Tibial artery (tissue), 4 donors: ENCODE measurements at regions of chr21 and their contacts with region 1.

Region 1: GRCh38 chr21:42258153-42258884 is 39.4 kb downstream of the ABCG1 start:
- DNase-seq: peak; percentile 67 to 76
- H3K4me3 ChIP-seq: no peak overlapping the region
- H3K27ac ChIP-seq: no peak overlapping the region
- H3K4me1 ChIP-seq: peaks cover 0 to 10% (median 5%) of the 10 kb centered on the region in 4 donors
- H3K27me3 ChIP-seq: peaks cover 0 to 40% of the 10 kb centered on the region in 2 donors
- CTCF ChIP-seq: peak; percentile 72 to 77

Region 2: GRCh38 chr21:42145569-42146272 is 112.6 kb before region 1 on chr21:
- intact Hi-C with region 1: loop called (anchors 2 kb)
- DNase-seq: peak in 1 of 2 donors; percentile 68
- H3K4me3 ChIP-seq: no peak overlapping the region
- H3K27ac ChIP-seq: no peak overlapping the region
- H3K4me1 ChIP-seq: peaks cover 0 to 3% (median 0%) of the 10 kb centered on the region in 4 donors
- H3K27me3 ChIP-seq: peaks cover 0 to 28% of the 10 kb centered on the region in 2 donors
- CTCF ChIP-seq: peak; percentile 86 to 92

Region 3: GRCh38 chr21:42164064-42164789 is 94.1 kb before region 1 on chr21:
- intact Hi-C with region 1: loop called (anchors 5 kb)
- DNase-seq: peak in 1 of 2 donors; percentile 60
- H3K4me3 ChIP-seq: no peak overlapping the region
- H3K27ac ChIP-seq: no peak overlapping the region
- H3K4me1 ChIP-seq: no peaks in the 10 kb centered on the region
- H3K27me3 ChIP-seq: peaks cover 0 to 13% of the 10 kb centered on the region in 2 donors
- CTCF ChIP-seq: peak; percentile 32 to 42

Region 4: DNA sequence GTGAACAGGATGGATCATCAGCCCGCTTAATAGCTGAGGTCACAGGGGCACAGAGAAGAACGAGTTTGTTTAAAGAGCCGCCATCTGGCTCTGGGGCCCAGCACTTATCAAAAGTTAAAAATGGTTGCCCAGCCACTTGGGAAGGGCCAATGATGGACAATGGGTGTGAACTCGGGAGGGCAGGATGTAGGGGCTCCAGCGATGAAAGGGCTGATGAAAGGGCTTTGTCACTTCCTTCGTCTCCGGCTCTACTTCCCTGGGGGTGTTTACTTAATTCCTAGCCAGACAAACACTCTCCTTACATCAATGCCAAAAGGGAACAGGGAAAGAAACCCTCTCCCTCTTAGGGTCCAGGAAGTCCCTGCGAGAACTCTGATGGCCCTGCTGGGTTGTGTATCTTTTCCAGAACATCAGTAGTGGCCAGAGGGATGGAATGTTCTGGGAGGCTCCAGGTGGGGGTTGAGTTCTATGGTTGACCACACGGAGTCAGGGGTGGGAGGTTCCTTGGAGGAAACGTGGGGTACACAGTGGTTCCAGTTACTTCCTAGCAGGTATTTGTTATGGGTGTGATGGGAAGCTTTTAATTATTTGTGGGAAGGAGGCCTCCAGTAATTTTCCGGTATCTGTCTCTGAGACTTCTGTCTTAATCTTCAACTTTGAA is 48.4 kb before region 1 on chr21:
- intact Hi-C with region 1: loop called (anchors 5 kb)
- DNase-seq: peak in 1 of 2 donors; percentile 20
- H3K4me3 ChIP-seq: no peak overlapping the region
- H3K27ac ChIP-seq: no peak overlapping the region
- H3K4me1 ChIP-seq: no peaks in the 10 kb centered on the region
- H3K27me3 ChIP-seq: peaks cover 0 to 24% of the 10 kb centered on the region in 2 donors
- CTCF ChIP-seq: no peak